Left ventricle myocardium superior (tissue), 1 donor: ENCODE measurements at regions of chr1 and their contacts with region 1.

Region 1: DNA sequence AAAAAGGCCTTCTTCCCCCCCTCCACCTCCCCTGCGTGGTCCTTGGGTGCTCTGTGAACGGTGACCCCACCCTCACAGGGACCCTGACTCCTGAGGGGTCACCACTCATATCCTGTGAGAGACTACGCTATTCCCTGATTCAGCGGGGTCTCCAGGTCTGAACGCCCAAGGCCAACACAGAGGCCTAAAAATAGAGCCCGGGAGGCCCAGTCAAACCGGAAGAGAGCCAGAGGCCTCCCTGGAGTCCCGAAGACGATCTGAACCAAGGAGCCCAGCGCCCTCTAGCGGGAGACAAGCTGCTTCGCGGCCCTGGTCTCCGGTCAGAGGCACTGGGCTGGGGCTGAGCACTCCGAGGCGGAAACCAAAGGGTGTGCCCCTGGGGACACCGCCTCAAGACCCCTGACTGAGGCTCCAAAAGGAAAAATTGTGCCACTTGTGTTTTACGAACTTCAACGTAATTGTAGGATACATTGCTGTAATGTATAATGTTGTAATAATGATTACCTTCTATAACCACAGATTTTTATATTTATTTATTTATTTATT is 42.4 kb upstream of the PSEN2 start:
- DNase-seq: peak; percentile 95
- ATAC-seq: peak; percentile 97

Region 2: DNA sequence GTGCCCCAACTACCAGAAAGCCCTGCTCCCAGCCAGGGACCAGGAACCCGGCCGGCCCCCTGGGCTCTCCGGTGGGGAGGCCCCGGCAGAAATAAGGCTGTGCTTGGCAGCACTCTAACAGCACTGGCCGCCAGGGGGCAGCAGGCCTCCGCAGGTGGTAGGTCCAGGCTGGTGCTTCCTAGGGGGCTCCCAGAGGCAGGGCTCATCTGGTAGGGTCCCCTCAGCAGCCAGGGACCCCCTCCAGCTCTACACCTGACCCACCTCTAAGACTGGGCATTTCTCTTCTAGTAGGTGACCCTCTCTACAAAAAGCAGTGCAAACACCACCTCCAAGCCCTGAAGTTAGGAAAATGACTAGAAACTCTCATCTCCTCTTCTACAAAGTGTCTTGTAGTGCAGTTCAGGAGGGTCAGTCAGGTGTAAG is 193.9 kb before region 1 on chr1:
- intact Hi-C with region 1: loop called (anchors 5 kb)
- DNase-seq: peak; percentile 93
- ATAC-seq: peak; percentile 79

Region 3: GRCh38 chr1:226741009-226741408 is 87.0 kb before region 1 on chr1:
- intact Hi-C with region 1: loop called (anchors 10 kb)
- DNase-seq: no peak
- ATAC-seq: no peak

Region 4: DNA sequence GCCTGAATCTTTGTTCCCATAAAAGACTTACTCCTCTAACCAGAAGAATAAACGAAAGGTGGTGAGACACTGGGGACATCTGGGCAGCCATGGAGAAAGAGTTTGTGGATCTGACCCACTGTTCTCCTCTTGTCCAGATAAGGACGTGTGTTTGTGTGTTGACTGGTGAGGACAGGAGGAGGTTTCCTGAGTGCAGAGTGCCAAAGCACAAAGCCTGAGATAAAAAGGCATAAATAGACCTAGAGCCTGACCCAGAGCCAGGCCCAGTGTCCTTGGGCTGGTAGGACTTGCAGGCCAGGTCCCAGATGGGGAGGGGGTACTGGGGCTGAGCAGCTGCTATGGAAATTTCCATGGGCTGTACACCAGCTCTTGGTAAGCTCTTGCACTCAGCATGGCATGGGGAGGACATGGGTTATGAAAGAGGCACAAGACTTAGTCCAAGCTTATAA is 92.4 kb after region 1 on chr1:
- intact Hi-C with region 1: no loop called
- DNase-seq: peak; percentile 87
- ATAC-seq: peak; percentile 94